Naive thymus-derived CD4-positive, alpha-beta T cell (primary cell): ENCODE measurements at regions of chr5 and their contacts with region 1.

Region 1: DNA sequence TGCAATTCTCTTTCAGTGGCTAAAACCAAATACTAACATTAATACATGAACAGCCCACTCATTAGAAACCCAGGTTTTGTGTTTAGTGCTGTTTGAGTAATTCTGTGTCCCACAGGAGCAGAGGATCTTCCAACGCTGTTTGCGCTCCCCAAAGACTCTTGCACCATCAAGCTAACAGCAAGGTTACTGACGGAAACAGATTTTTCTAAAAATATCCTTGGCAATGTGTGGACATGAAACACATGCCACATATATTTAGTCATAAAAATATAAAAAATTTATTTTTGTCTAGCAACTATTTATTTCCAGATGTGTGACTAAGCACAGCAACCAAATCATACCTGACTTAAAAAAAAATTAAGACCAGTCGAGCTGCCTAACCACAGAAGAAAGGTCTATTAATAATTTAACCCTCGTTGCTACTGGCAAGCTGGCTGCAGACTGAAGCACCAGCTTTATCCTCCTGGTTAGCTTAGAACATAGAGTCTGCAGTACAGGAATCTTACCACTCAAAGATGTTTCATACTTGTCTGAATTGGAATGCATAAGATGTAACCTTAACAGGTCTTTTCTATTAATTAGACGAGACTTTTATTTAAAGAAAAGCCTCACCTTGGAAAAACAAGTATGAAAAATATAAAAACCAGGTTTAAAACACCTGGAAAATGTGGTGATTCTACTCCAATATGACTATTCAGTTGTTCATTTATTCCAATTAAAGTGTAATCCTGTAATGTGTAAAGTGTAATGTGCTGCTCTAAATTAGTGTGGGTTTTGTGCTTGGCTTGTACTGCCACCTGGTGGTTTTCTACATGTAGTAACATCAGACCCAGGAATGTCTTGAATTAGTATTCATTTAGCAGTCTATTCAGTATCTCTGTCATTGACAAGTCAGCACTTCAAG is 272.5 kb downstream of the EPB41L4A start:
- DNase-seq: peak in 8 of 9 donors; percentile 32 to 75 (median 62)
- ATAC-seq: peak; percentile 97
- H3K4me3 ChIP-seq: no peak overlapping the region
- H3K4me3 Mint-ChIP-seq: no peak overlapping the region
- H3K27ac ChIP-seq: no peak overlapping the region
- H3K27ac Mint-ChIP-seq: no peak overlapping the region
- H3K4me1 ChIP-seq: no peaks in the 10 kb centered on the region
- H3K4me1 Mint-ChIP-seq: no peaks in the 10 kb centered on the region
- H3K27me3 ChIP-seq: peaks cover 0 to 3% of the 10 kb centered on the region in 2 donors
- H3K27me3 Mint-ChIP-seq: peaks cover 8 to 17% (median 9%) of the 10 kb centered on the region in 5 donors

Region 2: GRCh38 chr5:110441035-110441434 is 1705.5 kb before region 1 on chr5:
- CTCF ChIA-PET with region 1: no interaction called
- POLR2A ChIA-PET with region 1: no interaction called
- intact Hi-C with region 1: loop called in 1 of 2 experiments (anchors 10 kb)
- DNase-seq: no peak
- ATAC-seq: no peak
- H3K4me3 ChIP-seq: no peak overlapping the region
- H3K4me3 Mint-ChIP-seq: no peak overlapping the region
- H3K27ac ChIP-seq: no peak overlapping the region
- H3K27ac Mint-ChIP-seq: no peak overlapping the region
- H3K4me1 ChIP-seq: no peaks in the 10 kb centered on the region
- H3K4me1 Mint-ChIP-seq: no peaks in the 10 kb centered on the region
- H3K27me3 ChIP-seq: no peaks in the 10 kb centered on the region
- H3K27me3 Mint-ChIP-seq: peaks cover 0 to 16% (median 6%) of the 10 kb centered on the region in 5 donors

Region 3: GRCh38 chr5:111278845-111279504 is 867.6 kb before region 1 on chr5:
- CTCF ChIA-PET with region 1: no interaction called
- POLR2A ChIA-PET with region 1: no interaction called
- intact Hi-C with region 1: loop called (anchors 1 to 2 kb)
- DNase-seq: peak; percentile 75 to 89 (median 82)
- ATAC-seq: peak; percentile 99
- H3K4me3 ChIP-seq: no peak overlapping the region
- H3K4me3 Mint-ChIP-seq: peak overlapping the region; percentile 2 to 83 (median 64)
- H3K27ac ChIP-seq: no peak overlapping the region
- H3K27ac Mint-ChIP-seq: peak overlapping the region in 7 of 9 donors; percentile 8 to 94 (median 77)
- H3K4me1 ChIP-seq: peaks cover 7 to 13% of the 10 kb centered on the region in 2 donors
- H3K4me1 Mint-ChIP-seq: peaks cover 29 to 94% (median 90%) of the 10 kb centered on the region in 7 donors
- H3K27me3 ChIP-seq: no peaks in the 10 kb centered on the region
- H3K27me3 Mint-ChIP-seq: no peaks in the 10 kb centered on the region

Region 4: DNA sequence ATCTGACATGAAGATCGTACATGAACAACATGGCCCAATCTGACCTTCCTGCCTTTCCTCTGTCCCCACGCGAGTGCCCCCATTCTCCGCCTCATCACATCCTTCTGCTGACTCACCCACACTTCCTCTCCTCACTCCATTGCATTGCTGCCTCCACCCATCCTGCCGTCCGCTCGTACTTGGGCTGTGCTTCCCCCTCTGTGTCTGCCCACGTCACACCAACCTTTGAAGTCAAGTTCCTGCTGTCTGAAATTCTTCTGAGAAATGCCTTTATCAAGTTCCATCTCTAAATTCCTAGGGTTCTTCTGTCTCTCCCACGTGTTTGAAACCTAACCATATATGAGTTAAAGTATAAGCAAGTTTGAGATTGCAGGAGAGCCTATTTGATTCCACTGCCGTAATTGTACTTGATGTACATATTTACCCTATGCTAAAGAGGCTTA is 616.3 kb before region 1 on chr5:
- CTCF ChIA-PET with region 1: no interaction called
- POLR2A ChIA-PET with region 1: no interaction called
- intact Hi-C with region 1: loop called (anchors 1 kb)
- DNase-seq: peak; percentile 51 to 94 (median 78)
- ATAC-seq: peak; percentile 100
- H3K4me3 ChIP-seq: peak overlapping the region; percentile 6
- H3K4me3 Mint-ChIP-seq: peak overlapping the region; percentile 1 to 78 (median 66)
- H3K27ac ChIP-seq: peak overlapping the region; percentile 34
- H3K27ac Mint-ChIP-seq: peak overlapping the region; percentile 6 to 90 (median 76)
- H3K4me1 ChIP-seq: peaks cover 9 to 13% of the 10 kb centered on the region in 2 donors
- H3K4me1 Mint-ChIP-seq: peaks cover 10 to 28% (median 14%) of the 10 kb centered on the region in 7 donors
- H3K27me3 ChIP-seq: no peaks in the 10 kb centered on the region
- H3K27me3 Mint-ChIP-seq: peaks cover 0 to 3% (median 0%) of the 10 kb centered on the region in 5 donors

Region 5: DNA sequence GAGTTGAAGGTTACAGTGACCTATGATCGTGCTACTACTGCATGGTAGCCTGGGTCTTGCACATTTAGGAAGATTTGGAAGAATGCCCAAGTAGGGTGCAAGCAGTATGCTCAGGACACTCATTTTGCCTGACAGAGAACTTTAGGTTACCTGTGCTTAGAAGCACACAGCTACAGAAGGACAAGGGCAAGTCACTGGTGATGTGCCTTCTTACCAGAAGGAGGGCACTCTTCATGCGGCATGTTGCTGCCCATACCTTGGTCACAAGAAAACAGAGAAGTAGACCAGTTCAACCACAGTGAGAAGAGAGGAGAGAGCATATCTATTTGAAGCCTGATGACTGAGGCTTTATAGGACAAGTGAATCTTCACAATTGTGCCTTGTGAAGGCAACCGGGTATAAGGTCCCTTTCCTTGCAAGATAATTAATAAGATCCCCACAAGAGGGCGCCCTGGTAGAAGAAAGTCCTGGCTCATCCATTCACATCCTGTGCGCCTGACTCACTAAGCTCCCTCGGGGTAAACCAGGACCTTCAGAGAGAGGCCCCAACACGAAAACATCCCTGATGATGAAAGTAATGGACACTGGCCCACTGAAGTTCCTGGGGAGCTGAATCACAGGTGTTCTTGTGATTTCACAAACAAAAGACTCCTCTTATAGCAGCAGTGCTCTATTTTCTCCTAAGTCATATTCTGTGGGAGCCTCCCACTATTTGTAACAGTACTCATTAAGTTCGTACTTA is 596.1 kb before region 1 on chr5:
- CTCF ChIA-PET with region 1: interaction called, 13 read pairs
- POLR2A ChIA-PET with region 1: no interaction called
- intact Hi-C with region 1: loop called (anchors 1 kb)
- DNase-seq: peak; percentile 35 to 79 (median 68)
- ATAC-seq: peak; percentile 93
- H3K4me3 ChIP-seq: no peak overlapping the region
- H3K4me3 Mint-ChIP-seq: peak overlapping the region in 1 of 10 donors; percentile 19
- H3K27ac ChIP-seq: no peak overlapping the region
- H3K27ac Mint-ChIP-seq: peak overlapping the region in 2 of 9 donors; percentile 36 to 47
- H3K4me1 ChIP-seq: peaks cover 0 to 12% of the 10 kb centered on the region in 2 donors
- H3K4me1 Mint-ChIP-seq: peaks cover 8 to 22% (median 20%) of the 10 kb centered on the region in 7 donors
- H3K27me3 ChIP-seq: no peaks in the 10 kb centered on the region
- H3K27me3 Mint-ChIP-seq: peaks cover 0 to 4% (median 2%) of the 10 kb centered on the region in 5 donors

Region 6: GRCh38 chr5:111685971-111686370 is 460.6 kb before region 1 on chr5:
- CTCF ChIA-PET with region 1: no interaction called
- POLR2A ChIA-PET with region 1: no interaction called
- intact Hi-C with region 1: loop called (anchors 1 kb)
- DNase-seq: no peak
- ATAC-seq: no peak
- H3K4me3 ChIP-seq: no peak overlapping the region
- H3K4me3 Mint-ChIP-seq: no peak overlapping the region
- H3K27ac ChIP-seq: no peak overlapping the region
- H3K27ac Mint-ChIP-seq: no peak overlapping the region
- H3K4me1 ChIP-seq: no peaks in the 10 kb centered on the region
- H3K4me1 Mint-ChIP-seq: no peaks in the 10 kb centered on the region
- H3K27me3 ChIP-seq: no peaks in the 10 kb centered on the region
- H3K27me3 Mint-ChIP-seq: peaks cover 0 to 9% (median 3%) of the 10 kb centered on the region in 5 donors